ENCODE measurements at regions of chr13 and their contacts with region 1.

Region 1: DNA sequence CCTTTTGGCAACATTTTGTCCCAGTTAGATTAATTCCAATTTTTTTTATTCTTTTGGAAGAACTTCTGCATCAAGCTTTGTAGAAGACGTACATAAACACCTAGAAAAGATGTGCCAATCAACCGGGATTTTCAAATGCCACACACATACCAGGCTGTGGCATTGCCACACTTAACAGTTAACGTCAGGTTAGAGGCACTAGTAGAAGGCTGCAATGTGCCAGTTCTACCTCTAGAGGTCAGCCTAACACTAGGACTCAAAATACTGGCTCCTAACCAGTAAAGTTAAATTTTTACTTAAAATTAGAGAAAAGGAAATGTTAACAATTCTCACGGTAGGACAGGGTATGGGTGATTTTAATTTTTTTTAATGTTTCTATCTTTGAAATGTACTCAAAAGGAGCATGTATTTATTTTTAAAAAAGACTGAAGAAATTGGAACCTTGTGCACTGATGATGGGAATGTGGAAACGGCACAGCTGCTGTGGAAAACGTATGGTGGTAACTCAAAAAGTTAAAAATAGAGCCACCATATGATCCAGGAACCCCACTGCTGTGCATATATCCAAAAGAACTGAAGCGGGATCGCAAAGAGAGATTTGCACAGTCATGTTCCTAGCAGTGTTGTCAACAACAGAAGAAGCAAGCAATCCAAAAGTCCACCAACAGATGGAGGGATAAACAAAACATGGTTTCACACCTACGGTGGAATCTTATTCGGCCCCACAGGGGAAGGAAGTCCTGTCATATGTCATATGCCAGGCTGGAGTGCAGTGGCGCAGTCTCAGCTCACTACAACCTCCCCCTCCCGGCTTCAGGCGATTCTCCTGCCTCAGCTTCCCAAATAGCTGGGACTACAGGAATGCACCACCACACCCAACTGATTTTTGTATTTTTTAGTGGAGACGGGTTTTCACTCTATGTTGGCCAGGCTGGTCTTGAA is 30.3 kb downstream of the CRYL1 start:
- DNase-seq: peak; percentile 90
- ATAC-seq: peak; percentile 72
- H3K4me3 ChIP-seq: no peak overlapping the region
- H3K27ac ChIP-seq: no peak overlapping the region
- H3K4me1 ChIP-seq: peaks cover 27% of the 10 kb centered on the region
- H3K27me3 ChIP-seq: no peaks in the 10 kb centered on the region
- CTCF ChIP-seq: peak; percentile 98

Region 2: DNA sequence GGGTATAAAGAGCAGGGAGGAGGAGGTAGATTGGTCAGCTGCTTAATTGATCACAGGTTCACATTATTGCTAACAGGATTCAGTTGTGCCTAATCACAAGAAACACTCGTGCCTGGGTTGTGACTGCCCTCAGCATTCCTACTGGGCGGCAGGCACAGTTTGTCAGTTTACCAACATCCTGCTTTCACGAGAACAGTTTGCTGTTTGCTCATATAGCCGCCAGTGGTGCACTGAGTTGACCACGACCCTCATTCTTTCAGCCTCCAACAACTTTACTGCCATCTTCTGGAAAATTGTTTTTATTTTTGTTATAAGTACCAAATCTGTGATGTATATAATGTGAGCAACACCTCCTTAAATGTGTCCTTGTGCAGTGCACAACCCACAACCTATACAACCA is 55.4 kb after region 1 on chr13:
- CTCF ChIA-PET with region 1: no interaction called
- POLR2A ChIA-PET with region 1: no interaction called
- intact Hi-C with region 1: loop called (anchors 2 kb)
- DNase-seq: peak; percentile 19
- ATAC-seq: peak; percentile 43
- H3K4me3 ChIP-seq: no peak overlapping the region
- H3K27ac ChIP-seq: no peak overlapping the region
- H3K4me1 ChIP-seq: no peaks in the 10 kb centered on the region
- H3K27me3 ChIP-seq: no peaks in the 10 kb centered on the region
- CTCF ChIP-seq: 0 out of 2 replicates have a peak, but pooled peaks have one; percentile 26

Region 3: DNA sequence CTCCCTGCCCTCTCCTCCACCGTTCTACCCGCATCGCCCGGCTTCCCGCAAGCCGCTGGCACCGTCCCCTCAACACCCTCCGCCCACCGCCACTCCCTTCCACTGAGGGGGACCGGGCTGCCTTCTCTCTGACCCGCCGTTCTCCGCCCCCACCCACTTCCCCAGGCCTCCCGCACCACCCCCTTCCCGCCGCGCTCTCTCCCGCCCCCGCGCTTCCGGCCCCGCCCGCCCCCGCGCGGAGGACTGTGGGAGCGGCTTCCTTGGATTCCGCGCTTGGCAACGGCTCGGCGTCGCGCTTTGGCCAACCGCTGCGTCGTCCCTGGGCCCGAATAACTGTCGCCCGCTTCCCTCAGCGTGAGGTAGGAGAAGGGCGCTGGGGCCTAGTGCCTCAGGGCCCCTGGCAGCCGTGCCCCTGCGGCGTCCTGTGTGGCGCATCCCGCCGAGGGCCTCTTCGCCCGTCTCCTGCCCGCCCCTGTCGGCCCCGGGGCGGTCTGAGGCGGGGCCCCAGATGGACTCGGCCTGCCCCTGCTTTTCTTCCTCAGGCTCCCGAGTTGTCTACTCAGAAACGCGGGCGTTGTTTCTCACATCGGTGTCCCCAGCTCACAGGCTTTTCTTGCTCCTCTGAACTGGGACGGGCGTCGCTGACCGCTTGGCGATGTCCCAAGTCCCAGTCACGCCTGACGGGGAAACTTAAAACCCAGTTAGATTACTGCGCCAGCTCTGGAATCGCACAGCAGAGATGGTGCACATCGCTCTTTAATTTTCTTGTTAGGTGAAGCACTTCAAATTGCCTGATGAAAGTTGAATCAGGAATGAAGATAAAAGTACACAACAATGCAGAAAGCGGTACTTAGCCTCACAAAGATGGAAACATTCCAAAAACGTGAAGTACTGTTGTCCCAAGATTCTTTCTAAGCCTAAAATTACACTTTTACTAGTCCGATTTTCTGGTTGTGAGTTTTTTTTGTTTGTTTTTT is 71.8 kb after region 1 on chr13 and contains the start of gene IFT88:
- CTCF ChIA-PET with region 1: no interaction called
- POLR2A ChIA-PET with region 1: no interaction called
- intact Hi-C with region 1: loop called (anchors 5 kb)
- DNase-seq: peak; percentile 89
- ATAC-seq: peak; percentile 80
- H3K4me3 ChIP-seq: peak within 1 kb of the TSS; percentile 77
- H3K27ac ChIP-seq: peak within 1 kb of the TSS; percentile 87
- H3K4me1 ChIP-seq: peaks cover 13% of the 10 kb centered on the region
- H3K27me3 ChIP-seq: no peaks in the 10 kb centered on the region
- CTCF ChIP-seq: no peak
- total RNA-seq, gene IFT88: 11.9 and 12.6 TPM in 2 replicates

Region 4: DNA sequence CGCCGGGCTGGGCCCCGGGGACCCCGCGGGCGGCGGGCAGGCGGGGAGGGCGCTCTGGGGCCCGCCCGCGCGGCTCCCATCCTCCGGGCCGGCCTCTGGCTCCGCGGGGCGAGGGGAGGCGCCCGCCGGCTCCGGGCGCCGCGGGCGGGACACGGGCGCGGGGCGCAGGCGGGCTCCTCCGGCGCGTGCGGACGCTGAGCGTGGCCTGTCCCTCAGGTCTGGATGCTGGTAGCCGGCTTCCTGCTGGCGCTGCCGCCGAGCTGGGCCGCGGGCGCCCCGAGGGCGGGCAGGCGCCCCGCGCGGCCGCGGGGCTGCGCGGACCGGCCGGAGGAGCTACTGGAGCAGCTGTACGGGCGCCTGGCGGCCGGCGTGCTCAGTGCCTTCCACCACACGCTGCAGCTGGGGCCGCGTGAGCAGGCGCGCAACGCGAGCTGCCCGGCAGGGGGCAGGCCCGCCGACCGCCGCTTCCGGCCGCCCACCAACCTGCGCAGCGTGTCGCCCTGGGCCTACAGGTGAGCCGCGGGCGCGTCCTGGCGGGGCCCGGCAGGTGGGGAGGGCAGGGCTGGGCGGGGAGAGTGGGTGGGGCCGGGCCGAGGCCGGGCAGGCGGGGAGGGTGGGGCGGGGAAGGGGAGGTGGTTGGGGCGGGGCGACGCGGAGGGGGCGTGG is 208.6 kb after region 1 on chr13:
- CTCF ChIA-PET with region 1: interaction called, 3 read pairs
- POLR2A ChIA-PET with region 1: no interaction called
- intact Hi-C with region 1: loop called (anchors 2 kb)
- DNase-seq: peak; percentile 94
- ATAC-seq: peak; percentile 84
- H3K4me3 ChIP-seq: peak overlapping the region; percentile 40; the same call in 1 of the 2 replicates
- H3K27ac ChIP-seq: no peak overlapping the region
- H3K4me1 ChIP-seq: peaks cover 25% of the 10 kb centered on the region
- H3K27me3 ChIP-seq: no peaks in the 10 kb centered on the region
- CTCF ChIP-seq: peak; percentile 26; the same call in 1 of the 2 replicates

Region 5: GRCh38 chr13:20869542-20869941 is 374.2 kb after region 1 on chr13:
- CTCF ChIA-PET with region 1: no interaction called
- POLR2A ChIA-PET with region 1: no interaction called
- intact Hi-C with region 1: loop called (anchors 5 kb)
- DNase-seq: peak; percentile 16
- ATAC-seq: peak; percentile 37
- H3K4me3 ChIP-seq: no peak overlapping the region
- H3K27ac ChIP-seq: no peak overlapping the region
- H3K4me1 ChIP-seq: peaks cover 13% of the 10 kb centered on the region
- H3K27me3 ChIP-seq: no peaks in the 10 kb centered on the region
- CTCF ChIP-seq: peak; percentile 42; the same call in 1 of the 2 replicates

Region 6: DNA sequence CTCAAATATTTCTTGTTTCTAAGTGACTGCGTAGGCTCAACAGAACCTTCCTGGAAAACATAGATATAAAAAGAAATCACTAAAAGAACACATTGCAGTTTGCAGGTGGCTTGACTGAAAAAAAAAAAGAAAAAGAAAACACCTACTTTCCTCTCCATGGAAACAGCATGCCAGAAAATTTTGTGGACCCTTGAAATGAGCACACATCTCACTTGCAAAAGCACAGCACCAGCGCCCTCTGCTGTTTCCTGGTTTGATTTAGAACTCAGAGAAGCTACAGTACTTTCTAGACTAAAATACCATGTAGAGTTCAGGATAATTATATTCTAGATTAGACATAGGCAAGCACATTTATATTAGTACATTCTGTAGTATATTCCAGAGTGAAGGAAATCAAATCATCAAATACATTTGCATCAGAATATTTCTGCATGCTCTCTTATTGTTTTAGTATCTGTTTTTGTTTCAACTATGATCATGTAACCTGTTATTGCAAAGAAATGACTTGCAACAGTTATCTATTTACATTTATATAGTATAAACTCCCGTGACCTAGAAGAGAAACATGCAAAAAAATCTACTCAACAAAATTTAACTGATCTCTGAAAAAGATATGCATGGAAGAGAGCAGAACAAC is 429.5 kb after region 1 on chr13:
- CTCF ChIA-PET with region 1: interaction called, 3 read pairs
- POLR2A ChIA-PET with region 1: no interaction called
- intact Hi-C with region 1: loop called (anchors 2 kb)
- DNase-seq: peak; percentile 86
- ATAC-seq: peak; percentile 85
- H3K4me3 ChIP-seq: no peak overlapping the region
- H3K27ac ChIP-seq: no peak overlapping the region
- H3K4me1 ChIP-seq: no peaks in the 10 kb centered on the region
- H3K27me3 ChIP-seq: no peaks in the 10 kb centered on the region
- CTCF ChIP-seq: peak; percentile 97

Measured in PC-3 (cell line).